ENCODE measurements at regions of chr1 and their contacts with region 1.

Region 1: GRCh38 chr1:6294615-6295556 is 34.0 kb upstream of the GPR153 start:
- DNase-seq: no peak
- H3K4me3 ChIP-seq: no peak overlapping the region
- H3K27ac ChIP-seq: no peak overlapping the region
- H3K27me3 ChIP-seq: no peaks in the 10 kb centered on the region
- CTCF ChIP-seq: no peak

Region 2: DNA sequence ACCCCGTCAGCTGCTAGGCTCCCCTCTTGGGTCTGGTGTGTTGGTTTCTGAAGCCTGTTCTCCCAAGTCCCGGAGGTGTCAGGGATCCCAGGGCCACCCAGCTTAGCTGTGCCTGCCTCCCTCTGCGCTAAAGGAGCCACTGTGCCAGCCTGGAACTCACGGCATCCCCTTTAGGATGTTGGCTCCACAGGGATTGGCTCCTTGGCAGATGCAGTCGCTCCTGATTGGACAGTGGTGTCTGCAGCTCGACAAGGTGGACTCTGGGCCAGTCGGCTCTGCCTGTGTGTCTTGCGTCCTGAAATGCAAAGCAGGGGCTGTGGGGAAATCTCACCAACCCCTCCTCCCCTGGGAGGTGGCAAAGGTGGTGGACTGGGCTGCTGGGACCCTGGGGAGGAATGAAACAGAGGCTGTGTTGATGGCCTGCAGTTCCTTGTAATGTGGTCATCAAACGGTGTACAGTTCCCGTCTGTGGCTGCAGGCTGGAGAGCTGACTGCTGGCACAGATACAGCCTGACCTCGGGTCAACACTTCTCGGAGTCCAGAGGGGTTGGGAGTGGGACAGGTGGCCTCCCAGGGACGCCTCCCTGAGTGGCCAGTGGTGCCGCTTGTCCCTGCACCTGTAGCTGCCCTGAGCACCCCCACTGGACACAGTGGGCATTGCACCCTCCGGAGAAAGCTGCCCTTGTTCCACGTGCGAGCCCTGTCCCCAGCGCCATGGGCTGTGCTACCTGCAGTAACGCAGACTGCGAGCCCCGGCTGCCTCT is 260.7 kb before region 1 on chr1:
- intact Hi-C with region 1: loop called in 1 of 2 experiments (anchors 5 kb)
- DNase-seq: peak; percentile 45 to 89 (median 80)
- H3K4me3 ChIP-seq: peak overlapping the region in 54 of 59 donors; percentile 1 to 57 (median 34)
- H3K27ac ChIP-seq: peak overlapping the region in 32 of 59 donors; percentile 3 to 73 (median 37)
- H3K27me3 ChIP-seq: no peaks in the 10 kb centered on the region
- CTCF ChIP-seq: peak; percentile 41 to 81 (median 62)